ENCODE measurements at regions of chr11 and their contacts with region 1.

Region 1: DNA sequence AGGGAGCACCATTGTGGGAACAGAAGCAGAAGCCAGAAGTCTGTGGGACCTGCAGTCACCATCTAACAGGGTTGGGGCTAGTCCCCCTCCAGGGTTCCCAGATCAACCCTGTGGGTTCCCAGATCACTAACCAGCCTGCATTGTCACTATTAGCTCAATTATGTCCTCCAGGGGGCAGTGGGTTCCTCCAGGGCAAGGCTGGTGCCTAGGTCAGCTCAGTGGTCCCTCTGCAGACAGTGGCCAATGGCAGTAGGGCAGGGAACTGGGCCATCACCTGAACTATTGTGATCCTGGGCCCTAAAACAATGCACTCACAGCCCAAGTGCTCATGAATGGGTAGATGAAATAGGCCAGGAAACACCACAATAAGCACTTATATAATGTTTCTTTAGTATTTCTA is 18.8 kb upstream of the PRSS23 start:
- DNase-seq: peak; percentile 45
- ATAC-seq: peak; percentile 98
- H3K4me3 Mint-ChIP-seq: no peak overlapping the region
- H3K27ac Mint-ChIP-seq: no peak overlapping the region
- H3K4me1 Mint-ChIP-seq: no peaks in the 10 kb centered on the region
- H3K27me3 Mint-ChIP-seq: no peaks in the 10 kb centered on the region
- CTCF ChIP-seq: no peak

Region 2: GRCh38 chr11:86698639-86699400 is 82.7 kb before region 1 on chr11:
- CTCF ChIA-PET with region 1: no interaction called
- POLR2A ChIA-PET with region 1: no interaction called
- DNase-seq: no peak
- ATAC-seq: peak; percentile 73
- H3K4me3 Mint-ChIP-seq: no peak overlapping the region
- H3K27ac Mint-ChIP-seq: no peak overlapping the region
- H3K4me1 Mint-ChIP-seq: peaks cover 10% of the 10 kb centered on the region
- H3K27me3 Mint-ChIP-seq: peaks cover 2% of the 10 kb centered on the region; the same call in 1 of the 2 replicates
- CTCF ChIP-seq: no peak

Region 3: DNA sequence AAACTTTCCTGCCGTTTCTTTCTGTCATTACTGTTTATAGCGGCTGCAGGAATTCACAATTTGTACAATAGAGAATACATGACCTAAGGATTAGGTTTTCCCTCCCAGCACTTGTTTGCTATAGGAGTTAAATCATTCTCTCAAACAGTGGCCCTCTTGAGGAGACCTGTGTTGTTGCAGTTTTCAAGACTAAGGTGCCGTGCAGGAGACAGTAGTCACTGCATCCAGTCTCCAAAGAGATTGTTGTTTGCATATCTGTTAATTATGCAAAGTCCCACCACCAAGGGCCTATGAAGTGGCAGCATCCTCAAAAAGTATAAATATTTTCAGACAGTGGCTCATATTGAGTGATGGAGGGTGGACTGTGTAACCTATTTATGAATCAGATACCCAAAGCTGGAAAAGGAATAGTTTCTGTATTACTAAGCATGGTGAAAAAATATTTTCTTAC is 21.1 kb after region 1 on chr11:
- CTCF ChIA-PET with region 1: interaction called, 10 read pairs
- POLR2A ChIA-PET with region 1: no interaction called
- DNase-seq: peak; percentile 25
- ATAC-seq: peak; percentile 46
- H3K4me3 Mint-ChIP-seq: no peak overlapping the region
- H3K27ac Mint-ChIP-seq: no peak overlapping the region
- H3K4me1 Mint-ChIP-seq: peaks cover 28% of the 10 kb centered on the region
- H3K27me3 Mint-ChIP-seq: peaks cover 39% of the 10 kb centered on the region
- CTCF ChIP-seq: peak; percentile 21; the same call in 1 of the 2 replicates

Region 4: GRCh38 chr11:86861810-86862209 is 80.3 kb after region 1 on chr11:
- CTCF ChIA-PET with region 1: no interaction called
- POLR2A ChIA-PET with region 1: no interaction called
- DNase-seq: no peak
- ATAC-seq: no peak
- H3K4me3 Mint-ChIP-seq: no peak overlapping the region
- H3K27ac Mint-ChIP-seq: no peak overlapping the region
- H3K4me1 Mint-ChIP-seq: 0 out of 2 replicates have a peak, but pooled peaks cover 2% of the 10 kb centered on the region
- H3K27me3 Mint-ChIP-seq: no peaks in the 10 kb centered on the region; the same call in 1 of the 2 replicates
- CTCF ChIP-seq: no peak

Region 5: DNA sequence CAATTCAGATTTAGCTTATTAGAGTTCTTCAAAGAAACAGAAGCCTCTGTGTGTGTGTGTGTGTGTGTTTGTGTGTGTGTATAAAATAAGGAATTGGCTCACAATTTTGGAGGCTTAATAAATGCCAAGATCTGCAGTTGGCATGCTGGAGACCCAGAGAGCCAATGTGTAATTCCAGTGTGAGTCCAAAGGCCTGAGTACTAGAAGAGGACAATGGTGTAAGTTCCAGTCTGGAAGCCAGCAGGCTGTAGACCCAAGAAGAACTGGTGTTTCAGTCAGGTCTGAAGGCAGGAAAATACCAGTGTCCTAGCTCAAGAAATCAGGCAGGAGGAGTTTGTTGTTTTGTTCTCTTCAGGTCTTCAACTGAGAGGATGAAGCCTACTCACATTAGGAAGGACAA is 276.2 kb after region 1 on chr11:
- CTCF ChIA-PET with region 1: no interaction called
- POLR2A ChIA-PET with region 1: no interaction called
- DNase-seq: no peak
- ATAC-seq: peak; percentile 34; the same call in 1 of the 2 replicates
- H3K4me3 Mint-ChIP-seq: no peak overlapping the region
- H3K27ac Mint-ChIP-seq: peak overlapping the region; percentile 21; the same call in 1 of the 2 replicates
- H3K4me1 Mint-ChIP-seq: peaks cover 17% of the 10 kb centered on the region
- H3K27me3 Mint-ChIP-seq: no peaks in the 10 kb centered on the region
- CTCF ChIP-seq: no peak

Measured in WTC11 (cell line).